T-cell (primary cell): ENCODE measurements at regions of chr1 and their contacts with region 1.

Region 1: GRCh38 chr1:167499664-167500101 is 18.6 kb downstream of the CD247 start:
- DNase-seq: peak in 7 of 35 experiments; percentile 16 to 65 (median 40)
- ATAC-seq: peak; percentile 46 to 78 (median 53)
- H3K4me3 ChIP-seq: no peak overlapping the region
- H3K4me3 Mint-ChIP-seq: peak overlapping the region; percentile 7 to 98 (median 31)
- H3K27ac ChIP-seq: peak overlapping the region; percentile 66
- H3K27ac Mint-ChIP-seq: peak overlapping the region; percentile 81 to 97
- H3K4me1 ChIP-seq: peaks cover 87% of the 10 kb centered on the region in 2 experiments
- H3K4me1 Mint-ChIP-seq: peaks cover 99 to 100% (median 99%) of the 10 kb centered on the region in 3 donors
- H3K27me3 ChIP-seq: no peaks in the 10 kb centered on the region
- H3K27me3 Mint-ChIP-seq: no peaks in the 10 kb centered on the region

Region 2: GRCh38 chr1:167121375-167122120 is 378.1 kb before region 1 on chr1:
- CTCF ChIA-PET with region 1: no interaction called
- POLR2A ChIA-PET with region 1: no interaction called
- DNase-seq: peak in 30 of 35 experiments; percentile 1 to 49 (median 23)
- ATAC-seq: peak; percentile 77 to 86 (median 82)
- H3K4me3 ChIP-seq: peak overlapping the region; percentile 49 to 79
- H3K4me3 Mint-ChIP-seq: peak overlapping the region; percentile 80 to 87 (median 84)
- H3K27ac ChIP-seq: no peak overlapping the region
- H3K27ac Mint-ChIP-seq: peak overlapping the region; percentile 66 to 67
- H3K4me1 ChIP-seq: peaks cover 0 to 10% of the 10 kb centered on the region in 2 experiments
- H3K4me1 Mint-ChIP-seq: peaks cover 0 to 4% (median 3%) of the 10 kb centered on the region in 3 donors
- H3K27me3 ChIP-seq: peaks cover 0 to 22% of the 10 kb centered on the region in 2 experiments
- H3K27me3 Mint-ChIP-seq: peaks cover 6 to 10% of the 10 kb centered on the region in 2 donors

Region 3: DNA sequence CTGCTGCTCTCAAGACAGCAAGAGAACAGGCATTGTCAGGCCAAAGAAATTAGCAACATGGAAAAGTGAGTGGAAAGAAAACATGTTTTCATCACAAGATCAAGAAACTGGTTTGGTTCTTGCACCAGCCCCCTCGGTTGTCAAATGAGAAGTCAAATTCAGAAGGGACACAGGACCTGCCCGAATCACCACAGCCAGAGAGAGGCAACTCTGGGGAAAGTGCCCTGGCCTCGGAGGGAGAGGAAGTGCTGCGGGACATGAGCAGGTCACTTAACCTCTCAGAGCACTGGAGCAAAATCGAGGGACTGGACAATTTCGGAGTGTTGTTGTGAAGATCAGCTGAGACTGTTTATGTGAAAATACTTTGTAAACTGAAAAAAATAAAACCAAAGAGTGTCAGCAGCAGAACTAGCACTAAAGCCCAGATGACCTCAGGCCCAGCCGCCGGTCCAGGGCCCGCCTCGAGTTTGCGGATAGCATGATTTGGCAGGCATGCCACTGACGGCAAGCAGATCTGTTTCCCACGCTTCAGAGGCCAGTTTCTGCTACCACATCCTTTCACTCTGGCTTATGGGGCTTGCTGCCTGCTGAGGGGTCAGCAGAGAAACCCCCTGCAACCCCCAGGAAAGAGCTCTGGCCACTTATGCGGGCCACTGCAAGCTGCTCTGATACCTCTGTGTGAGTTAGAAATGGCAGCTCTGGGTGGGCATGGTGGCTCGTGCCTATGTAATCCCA is 13.4 kb before region 1 on chr1:
- CTCF ChIA-PET with region 1: interaction called in 1 of 2 experiments, 3 read pairs
- POLR2A ChIA-PET with region 1: interaction called, 11 read pairs
- DNase-seq: peak in 5 of 35 experiments; percentile 33 to 54 (median 47)
- ATAC-seq: no peak
- H3K4me3 ChIP-seq: peak overlapping the region; percentile 1 to 14
- H3K4me3 Mint-ChIP-seq: peak overlapping the region; percentile 65 to 80 (median 72)
- H3K27ac ChIP-seq: peak overlapping the region; percentile 77
- H3K27ac Mint-ChIP-seq: peak overlapping the region; percentile 97
- H3K4me1 ChIP-seq: peaks cover 73 to 96% of the 10 kb centered on the region in 2 experiments
- H3K4me1 Mint-ChIP-seq: peaks cover 97 to 100% (median 98%) of the 10 kb centered on the region in 3 donors
- H3K27me3 ChIP-seq: no peaks in the 10 kb centered on the region
- H3K27me3 Mint-ChIP-seq: no peaks in the 10 kb centered on the region